SK-N-SH (cell line): ENCODE measurements at regions of chr3 and their contacts with region 1.

Region 1: DNA sequence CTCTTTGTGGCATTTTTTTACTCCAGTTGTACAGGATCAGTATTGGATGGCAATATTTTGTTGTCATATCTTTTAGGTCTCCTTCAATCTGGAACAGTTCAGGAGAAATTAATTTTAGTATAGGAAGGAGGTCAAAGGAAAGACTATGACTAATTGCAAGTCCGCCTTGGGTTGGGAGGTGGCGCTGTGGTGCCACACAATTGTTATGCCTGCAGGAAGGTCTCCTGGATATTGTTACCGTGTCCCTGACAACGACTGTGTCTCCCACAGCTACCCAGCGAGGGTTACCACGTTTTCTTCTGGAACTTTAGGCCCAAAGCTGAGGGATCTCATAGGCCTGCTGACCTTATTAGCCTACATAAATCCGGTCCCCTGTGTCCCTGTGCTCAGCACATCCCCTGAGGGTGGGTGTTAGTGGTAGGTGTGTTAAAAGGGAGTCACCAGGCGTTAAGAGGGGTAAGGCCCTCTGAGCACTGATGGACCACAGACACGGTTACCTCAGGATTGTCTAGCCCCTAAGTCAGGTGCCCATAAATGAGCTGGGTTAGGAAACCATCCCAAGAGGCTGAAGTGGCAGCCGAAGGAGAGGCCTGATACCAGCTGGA is 31.5 kb downstream of the KCNAB1 start:
- DNase-seq: peak; percentile 68
- H3K4me3 ChIP-seq: no peak overlapping the region; a peak in 1 of 4 replicates
- H3K27ac ChIP-seq: peak overlapping the region in 1 of 2 experiments; percentile 34; a peak in 2 of 4 replicates
- H3K4me1 ChIP-seq: peaks cover 0 to 8% of the 10 kb centered on the region in 2 experiments; a peak in 1 of 4 replicates
- H3K27me3 ChIP-seq: no peaks in the 10 kb centered on the region
- CTCF ChIP-seq: peak; percentile 92
- EP300 ChIP-seq: 0 out of 4 replicates have a peak, but pooled peaks of 1 of the 2 experiments have one; percentile 26
- RAD21 ChIP-seq: peak; percentile 99

Region 2: GRCh38 chr3:155714295-155714718 is 437.6 kb before region 1 on chr3:
- CTCF ChIA-PET with region 1: no interaction called
- POLR2A ChIA-PET with region 1: no interaction called
- DNase-seq: peak; percentile 23
- H3K4me3 ChIP-seq: no peak overlapping the region
- H3K27ac ChIP-seq: no peak overlapping the region
- H3K4me1 ChIP-seq: no peaks in the 10 kb centered on the region; a peak in 1 of 4 replicates
- H3K27me3 ChIP-seq: no peaks in the 10 kb centered on the region
- CTCF ChIP-seq: no peak
- EP300 ChIP-seq: no peak
- RAD21 ChIP-seq: no peak

Region 3: DNA sequence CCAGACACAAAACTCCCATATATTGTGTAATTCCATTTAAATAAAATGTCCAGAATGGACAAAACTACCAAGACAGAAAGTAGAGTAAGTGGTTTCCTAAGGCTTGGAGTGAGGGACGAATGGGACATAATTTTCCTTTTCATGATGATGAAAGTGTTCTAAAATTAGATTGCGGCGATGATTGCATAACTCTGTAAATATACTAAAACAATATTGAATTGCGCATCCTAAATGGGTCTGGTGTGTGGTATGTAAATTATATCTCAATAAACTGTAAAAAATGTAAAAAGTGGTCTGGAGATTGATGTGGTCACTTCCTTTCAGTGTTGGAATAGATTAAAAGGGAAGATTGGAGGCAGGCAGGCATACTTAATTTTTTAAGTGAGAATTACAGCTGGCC is 137.4 kb before region 1 on chr3:
- CTCF ChIA-PET with region 1: interaction called, 14 read pairs
- POLR2A ChIA-PET with region 1: no interaction called
- DNase-seq: no peak
- H3K4me3 ChIP-seq: no peak overlapping the region
- H3K27ac ChIP-seq: no peak overlapping the region
- H3K4me1 ChIP-seq: peaks cover 0 to 11% of the 10 kb centered on the region in 2 experiments; a peak in 2 of 4 replicates
- H3K27me3 ChIP-seq: 0 out of 2 replicates have a peak, but pooled peaks cover under 1% of the 10 kb centered on the region
- CTCF ChIP-seq: no peak
- EP300 ChIP-seq: no peak
- RAD21 ChIP-seq: no peak

Region 4: GRCh38 chr3:156024904-156025533 is 126.9 kb before region 1 on chr3:
- CTCF ChIA-PET with region 1: no interaction called
- POLR2A ChIA-PET with region 1: no interaction called
- DNase-seq: no peak
- H3K4me3 ChIP-seq: no peak overlapping the region
- H3K27ac ChIP-seq: no peak overlapping the region
- H3K4me1 ChIP-seq: no peaks in the 10 kb centered on the region
- H3K27me3 ChIP-seq: no peaks in the 10 kb centered on the region
- CTCF ChIP-seq: no peak
- EP300 ChIP-seq: no peak
- RAD21 ChIP-seq: no peak

Region 5: GRCh38 chr3:156174229-156174847 is 22.4 kb after region 1 on chr3:
- CTCF ChIA-PET with region 1: interaction called, 39 read pairs
- POLR2A ChIA-PET with region 1: no interaction called
- DNase-seq: peak; percentile 33
- H3K4me3 ChIP-seq: no peak overlapping the region
- H3K27ac ChIP-seq: peak overlapping the region; percentile 17 to 18; a peak in 2 of 4 replicates
- H3K4me1 ChIP-seq: peaks cover 9 to 10% of the 10 kb centered on the region in 2 experiments; a peak in 3 of 4 replicates
- H3K27me3 ChIP-seq: no peaks in the 10 kb centered on the region
- CTCF ChIP-seq: peak; percentile 78
- EP300 ChIP-seq: no peak
- RAD21 ChIP-seq: peak; percentile 82

Region 6: DNA sequence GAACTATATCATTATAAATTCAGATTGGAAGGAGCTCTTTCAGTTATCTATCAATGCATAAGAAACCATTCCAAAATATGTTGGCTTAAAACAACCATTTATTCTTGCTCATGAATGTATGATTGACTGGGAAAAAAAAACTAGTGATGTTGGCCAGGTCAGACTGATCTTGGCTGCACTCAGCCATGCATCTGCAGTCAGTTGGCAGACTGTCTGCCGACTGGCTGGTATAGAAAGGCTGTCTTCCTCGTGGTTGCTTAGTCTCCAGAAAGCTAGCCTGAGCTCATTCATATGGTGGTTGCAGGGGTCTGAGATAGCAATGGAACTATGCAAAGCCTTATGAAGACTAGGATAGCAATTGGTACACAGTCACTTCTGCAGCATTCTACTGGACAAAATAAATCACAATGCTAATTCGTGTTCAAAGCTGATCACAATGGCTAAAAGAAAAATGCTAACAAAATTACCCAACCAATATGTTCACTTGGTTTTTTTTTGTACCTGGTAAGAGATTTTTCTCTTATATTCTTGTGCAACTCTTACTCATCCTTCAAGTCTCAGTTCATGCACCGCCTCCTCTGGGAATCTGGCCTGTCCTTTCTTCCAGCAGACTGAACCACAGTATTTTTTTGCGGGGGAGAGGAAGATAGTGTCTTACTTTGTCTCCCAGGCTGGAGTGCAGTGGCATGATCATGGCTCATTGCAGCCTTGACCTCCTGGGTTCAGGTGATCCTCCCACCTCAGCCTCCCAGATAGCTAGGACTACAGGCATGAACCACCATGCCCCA is 95.2 kb after region 1 on chr3:
- CTCF ChIA-PET with region 1: no interaction called
- POLR2A ChIA-PET with region 1: no interaction called
- DNase-seq: no peak
- H3K4me3 ChIP-seq: no peak overlapping the region
- H3K27ac ChIP-seq: no peak overlapping the region
- H3K4me1 ChIP-seq: no peaks in the 10 kb centered on the region
- H3K27me3 ChIP-seq: no peaks in the 10 kb centered on the region
- CTCF ChIP-seq: no peak
- EP300 ChIP-seq: no peak
- RAD21 ChIP-seq: no peak

Region 7: GRCh38 chr3:156474560-156475389 is 322.8 kb after region 1 on chr3:
- CTCF ChIA-PET with region 1: interaction called, 15 read pairs
- POLR2A ChIA-PET with region 1: no interaction called
- DNase-seq: no peak
- H3K4me3 ChIP-seq: no peak overlapping the region; a peak in 1 of 4 replicates
- H3K27ac ChIP-seq: peak overlapping the region; percentile 5 to 50; a peak in 1 of 4 replicates
- H3K4me1 ChIP-seq: peaks cover 4 to 25% of the 10 kb centered on the region in 2 experiments; a peak in 3 of 4 replicates
- H3K27me3 ChIP-seq: no peaks in the 10 kb centered on the region
- CTCF ChIP-seq: peak; percentile 60
- EP300 ChIP-seq: no peak
- RAD21 ChIP-seq: peak; percentile 46

Region 8: DNA sequence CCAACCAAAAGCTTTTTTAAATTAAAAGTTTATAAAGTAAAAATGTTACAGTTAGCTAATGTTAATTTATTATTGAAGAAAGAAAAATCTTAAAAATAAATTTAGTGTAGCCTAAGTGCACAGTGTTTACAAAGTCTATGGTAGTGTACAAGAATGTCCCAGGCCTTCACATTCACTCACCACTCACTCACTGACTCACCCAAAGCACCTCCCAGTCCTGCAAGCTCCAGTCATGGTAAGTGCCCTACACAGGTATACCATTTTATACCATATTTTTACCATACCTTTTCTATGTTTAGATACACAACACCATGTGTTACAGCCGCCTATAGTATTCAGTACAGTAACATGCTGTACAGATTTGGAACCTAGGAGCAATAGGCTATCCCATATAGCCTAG is 373.9 kb after region 1 on chr3:
- CTCF ChIA-PET with region 1: interaction called, 21 read pairs
- POLR2A ChIA-PET with region 1: no interaction called
- DNase-seq: no peak
- H3K4me3 ChIP-seq: no peak overlapping the region
- H3K27ac ChIP-seq: no peak overlapping the region
- H3K4me1 ChIP-seq: peaks cover 2 to 7% of the 10 kb centered on the region in 2 experiments; a peak in 3 of 4 replicates
- H3K27me3 ChIP-seq: no peaks in the 10 kb centered on the region
- CTCF ChIP-seq: no peak
- EP300 ChIP-seq: no peak
- RAD21 ChIP-seq: no peak

Region 9: GRCh38 chr3:156554842-156555687 is 403.1 kb after region 1 on chr3 and contains the start of gene SSR3:
- CTCF ChIA-PET with region 1: interaction called, 14 read pairs
- POLR2A ChIA-PET with region 1: no interaction called
- DNase-seq: peak; percentile 92
- H3K4me3 ChIP-seq: peak within 1 kb of the TSS; percentile 92 to 94
- H3K27ac ChIP-seq: peak within 1 kb of the TSS; percentile 89 to 94
- H3K4me1 ChIP-seq: peaks cover 25 to 31% of the 10 kb centered on the region in 2 experiments
- H3K27me3 ChIP-seq: no peaks in the 10 kb centered on the region
- CTCF ChIP-seq: no peak
- EP300 ChIP-seq: peak in 1 of 2 experiments; percentile 27; a peak in 1 of 4 replicates
- RAD21 ChIP-seq: no peak
- polyA plus RNA-seq, gene SSR3: 61.7 and 96.1 TPM in 2 replicates

Region 10: DNA sequence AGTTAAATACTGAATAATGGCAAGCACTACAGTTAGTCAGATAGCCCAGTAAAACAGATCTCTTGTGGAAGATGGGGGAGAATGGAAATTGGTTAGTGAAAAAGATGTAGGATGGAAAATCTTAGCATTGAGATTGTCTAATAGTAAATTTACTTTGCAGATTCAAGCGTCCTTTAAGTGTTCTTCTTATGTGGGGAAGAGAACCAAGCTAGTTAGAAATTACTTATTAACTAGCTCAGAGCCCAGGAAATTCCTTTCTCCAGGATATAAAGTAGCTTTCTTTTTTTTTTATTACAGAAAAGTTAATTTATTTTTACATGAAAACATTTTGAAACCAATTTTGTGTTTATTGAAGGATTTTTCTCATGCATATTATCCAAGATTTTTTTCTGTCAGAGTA is 559.2 kb after region 1 on chr3:
- CTCF ChIA-PET with region 1: no interaction called
- POLR2A ChIA-PET with region 1: no interaction called
- DNase-seq: no peak
- H3K4me3 ChIP-seq: no peak overlapping the region
- H3K27ac ChIP-seq: no peak overlapping the region
- H3K4me1 ChIP-seq: no peaks in the 10 kb centered on the region
- H3K27me3 ChIP-seq: no peaks in the 10 kb centered on the region
- CTCF ChIP-seq: no peak
- EP300 ChIP-seq: no peak
- RAD21 ChIP-seq: no peak

Region 11: GRCh38 chr3:157088601-157089454 is 936.9 kb after region 1 on chr3:
- CTCF ChIA-PET with region 1: interaction called, 17 read pairs
- POLR2A ChIA-PET with region 1: interaction called, 4 read pairs
- DNase-seq: peak; percentile 99
- H3K4me3 ChIP-seq: peak overlapping the region; percentile 67 to 71
- H3K27ac ChIP-seq: peak overlapping the region; percentile 95 to 99
- H3K4me1 ChIP-seq: peaks cover 15 to 31% of the 10 kb centered on the region in 2 experiments
- H3K27me3 ChIP-seq: no peaks in the 10 kb centered on the region
- CTCF ChIP-seq: no peak; the same call in none of the 2 replicates
- EP300 ChIP-seq: peak in 1 of 2 experiments; percentile 30; a peak in 1 of 4 replicates
- RAD21 ChIP-seq: no peak